GM10248 (cell line): ENCODE measurements at regions of chrX and their contacts with region 1.

Region 1: DNA sequence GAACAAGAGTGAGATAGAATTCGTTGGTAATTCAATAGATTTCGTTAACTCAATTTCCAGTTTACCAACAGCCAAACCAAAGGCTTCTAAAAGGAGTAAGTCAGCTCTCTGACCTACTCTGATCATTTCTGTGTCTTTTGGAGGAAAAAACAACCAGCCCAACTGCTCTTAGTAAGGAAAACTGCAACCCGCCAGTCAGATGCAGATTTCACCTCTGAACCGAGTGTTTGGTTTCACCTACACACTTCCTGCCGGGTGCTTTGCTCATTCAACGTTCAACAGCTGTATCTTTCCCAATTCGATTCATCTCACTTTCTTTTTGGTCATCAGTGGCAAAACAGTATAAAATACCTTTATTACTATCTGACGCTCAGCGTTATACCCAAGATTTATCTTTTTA is 24.5 kb downstream of the TMSB4X start:
- DNase-seq: no peak
- CTCF ChIP-seq: no peak

Region 2: GRCh38 chrX:12984629-12985319 is 14.6 kb before region 1 on chrX:
- CTCF ChIA-PET with region 1: interaction called, 18 read pairs
- POLR2A ChIA-PET with region 1: no interaction called
- DNase-seq: no peak
- CTCF ChIP-seq: no peak